Activated CD8-positive, alpha-beta T cell treated with anti-CD3 and anti-CD28 coated beads for 36 hours (primary cell): ENCODE measurements at regions of chr2 and their contacts with region 1.

Region 1: DNA sequence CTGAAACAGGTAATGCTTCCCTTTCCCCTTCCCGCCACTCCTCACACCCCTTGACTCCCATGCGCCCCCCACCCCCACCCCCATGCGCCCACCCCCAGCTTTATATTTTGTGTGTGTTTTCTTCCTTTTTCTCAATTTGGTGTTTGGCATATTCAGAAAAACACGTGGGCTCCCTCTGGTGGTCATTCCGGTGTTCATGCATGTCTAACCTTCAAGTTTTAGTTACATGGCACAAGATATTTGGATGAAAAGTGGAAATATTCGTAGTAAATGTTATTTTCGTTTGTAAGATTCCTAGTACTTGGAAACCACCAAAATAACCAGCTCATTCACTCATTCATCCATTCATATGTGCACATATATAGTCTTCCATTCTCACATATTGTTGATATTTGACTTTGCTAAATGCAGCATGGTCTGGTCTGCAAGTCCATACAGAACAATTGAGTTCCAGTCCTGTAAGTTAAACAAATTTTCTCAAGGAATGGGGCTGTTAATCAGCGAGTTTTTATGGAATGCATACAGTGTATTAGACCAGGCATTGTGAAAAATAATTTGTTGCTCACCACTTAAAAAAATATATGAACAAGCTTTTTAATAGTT is 143.6 kb upstream of the MAP3K20 start:
- DNase-seq: peak; percentile 86
- ATAC-seq: peak; percentile 74
- H3K4me3 Mint-ChIP-seq: no peak overlapping the region
- H3K27ac Mint-ChIP-seq: no peak overlapping the region
- H3K4me1 Mint-ChIP-seq: peaks cover 9% of the 10 kb centered on the region
- H3K27me3 Mint-ChIP-seq: peaks cover 1% of the 10 kb centered on the region
- CTCF ChIP-seq: peak; percentile 69

Region 2: GRCh38 chr2:171109571-171109970 is 1822.4 kb before region 1 on chr2:
- CTCF ChIA-PET with region 1: no interaction called
- POLR2A ChIA-PET with region 1: no interaction called
- intact Hi-C with region 1: no loop called
- DNase-seq: no peak
- ATAC-seq: no peak
- H3K4me3 Mint-ChIP-seq: no peak overlapping the region
- H3K27ac Mint-ChIP-seq: no peak overlapping the region
- H3K4me1 Mint-ChIP-seq: peaks cover 39% of the 10 kb centered on the region
- H3K27me3 Mint-ChIP-seq: no peaks in the 10 kb centered on the region
- CTCF ChIP-seq: no peak

Region 3: GRCh38 chr2:172813314-172813888 is 118.6 kb before region 1 on chr2:
- CTCF ChIA-PET with region 1: interaction called, 103 read pairs
- POLR2A ChIA-PET with region 1: no interaction called
- intact Hi-C with region 1: no loop called
- DNase-seq: no peak
- ATAC-seq: no peak
- H3K4me3 Mint-ChIP-seq: no peak overlapping the region
- H3K27ac Mint-ChIP-seq: no peak overlapping the region
- H3K4me1 Mint-ChIP-seq: no peaks in the 10 kb centered on the region
- H3K27me3 Mint-ChIP-seq: peaks cover 2% of the 10 kb centered on the region
- CTCF ChIP-seq: no peak

Region 4: GRCh38 chr2:172869861-172870260 is 62.2 kb before region 1 on chr2:
- CTCF ChIA-PET with region 1: interaction called, 50 read pairs
- POLR2A ChIA-PET with region 1: no interaction called
- intact Hi-C with region 1: loop called (anchors 2 kb)
- DNase-seq: no peak
- ATAC-seq: no peak
- H3K4me3 Mint-ChIP-seq: no peak overlapping the region
- H3K27ac Mint-ChIP-seq: no peak overlapping the region
- H3K4me1 Mint-ChIP-seq: peaks cover 5% of the 10 kb centered on the region
- H3K27me3 Mint-ChIP-seq: peaks cover 3% of the 10 kb centered on the region
- CTCF ChIP-seq: no peak

Region 5: GRCh38 chr2:172909454-172909853 is 22.6 kb before region 1 on chr2:
- CTCF ChIA-PET with region 1: interaction called, 60 read pairs
- POLR2A ChIA-PET with region 1: no interaction called
- intact Hi-C with region 1: no loop called
- DNase-seq: no peak
- ATAC-seq: no peak
- H3K4me3 Mint-ChIP-seq: no peak overlapping the region
- H3K27ac Mint-ChIP-seq: no peak overlapping the region
- H3K4me1 Mint-ChIP-seq: peaks cover 9% of the 10 kb centered on the region
- H3K27me3 Mint-ChIP-seq: no peaks in the 10 kb centered on the region
- CTCF ChIP-seq: no peak

Region 6: GRCh38 chr2:172944022-172944793 is 12.2 kb after region 1 on chr2:
- CTCF ChIA-PET with region 1: interaction called, 22 read pairs
- POLR2A ChIA-PET with region 1: no interaction called
- intact Hi-C with region 1: no loop called
- DNase-seq: no peak
- ATAC-seq: peak; percentile 57
- H3K4me3 Mint-ChIP-seq: peak overlapping the region; percentile 28
- H3K27ac Mint-ChIP-seq: peak overlapping the region; percentile 81
- H3K4me1 Mint-ChIP-seq: peaks cover 30% of the 10 kb centered on the region
- H3K27me3 Mint-ChIP-seq: peaks cover 2% of the 10 kb centered on the region
- CTCF ChIP-seq: no peak

Region 7: GRCh38 chr2:172972005-172972619 is 40.1 kb after region 1 on chr2:
- CTCF ChIA-PET with region 1: interaction called, 20 read pairs
- POLR2A ChIA-PET with region 1: interaction called, 3 read pairs
- intact Hi-C with region 1: no loop called
- DNase-seq: peak; percentile 70
- ATAC-seq: peak; percentile 81
- H3K4me3 Mint-ChIP-seq: no peak overlapping the region
- H3K27ac Mint-ChIP-seq: no peak overlapping the region
- H3K4me1 Mint-ChIP-seq: peaks cover 33% of the 10 kb centered on the region
- H3K27me3 Mint-ChIP-seq: peaks cover 5% of the 10 kb centered on the region
- CTCF ChIP-seq: peak; percentile 85